A673 (cell line): ENCODE measurements at regions of chr9 and their contacts with region 1.

Region 1: GRCh38 chr9:81689343-81690190 is at the start of gene TLE1:
- DNase-seq: peak; percentile 97
- H3K4me3 ChIP-seq: peak within 1 kb of the TSS; percentile 40
- H3K27ac ChIP-seq: no peak within 1 kb of the TSS
- H3K4me1 ChIP-seq: no peaks in the 10 kb centered on the region
- H3K27me3 ChIP-seq: peaks cover 41% of the 10 kb centered on the region
- CTCF ChIP-seq: no peak
- total RNA-seq, gene TLE1: 2.2 and 3.1 TPM in 2 replicates

Region 2: GRCh38 chr9:81521892-81522291 is 167.7 kb before region 1 on chr9:
- CTCF ChIA-PET with region 1: interaction called, 4 read pairs
- POLR2A ChIA-PET with region 1: no interaction called
- intact Hi-C with region 1: loop called (anchors 2 kb)
- DNase-seq: no peak
- H3K4me3 ChIP-seq: no peak overlapping the region
- H3K27ac ChIP-seq: no peak overlapping the region
- H3K4me1 ChIP-seq: no peaks in the 10 kb centered on the region
- H3K27me3 ChIP-seq: no peaks in the 10 kb centered on the region
- CTCF ChIP-seq: no peak

Region 3: GRCh38 chr9:81823672-81824554 is 134.3 kb after region 1 on chr9:
- CTCF ChIA-PET with region 1: interaction called, 17 read pairs
- POLR2A ChIA-PET with region 1: no interaction called
- intact Hi-C with region 1: no loop called
- DNase-seq: no peak
- H3K4me3 ChIP-seq: no peak overlapping the region
- H3K27ac ChIP-seq: no peak overlapping the region
- H3K4me1 ChIP-seq: peaks cover 10% of the 10 kb centered on the region
- H3K27me3 ChIP-seq: no peaks in the 10 kb centered on the region
- CTCF ChIP-seq: no peak

Region 4: GRCh38 chr9:83372957-83373356 is 1683.4 kb after region 1 on chr9:
- CTCF ChIA-PET with region 1: no interaction called
- POLR2A ChIA-PET with region 1: no interaction called
- intact Hi-C with region 1: no loop called
- DNase-seq: no peak
- H3K4me3 ChIP-seq: no peak overlapping the region
- H3K27ac ChIP-seq: no peak overlapping the region
- H3K4me1 ChIP-seq: no peaks in the 10 kb centered on the region
- H3K27me3 ChIP-seq: no peaks in the 10 kb centered on the region
- CTCF ChIP-seq: no peak